Activated B cell treated with CpG ODN at 0.5 μM for 24 hours (primary cell): ENCODE measurements at regions of chr20 and their contacts with region 1.

Region 1: DNA sequence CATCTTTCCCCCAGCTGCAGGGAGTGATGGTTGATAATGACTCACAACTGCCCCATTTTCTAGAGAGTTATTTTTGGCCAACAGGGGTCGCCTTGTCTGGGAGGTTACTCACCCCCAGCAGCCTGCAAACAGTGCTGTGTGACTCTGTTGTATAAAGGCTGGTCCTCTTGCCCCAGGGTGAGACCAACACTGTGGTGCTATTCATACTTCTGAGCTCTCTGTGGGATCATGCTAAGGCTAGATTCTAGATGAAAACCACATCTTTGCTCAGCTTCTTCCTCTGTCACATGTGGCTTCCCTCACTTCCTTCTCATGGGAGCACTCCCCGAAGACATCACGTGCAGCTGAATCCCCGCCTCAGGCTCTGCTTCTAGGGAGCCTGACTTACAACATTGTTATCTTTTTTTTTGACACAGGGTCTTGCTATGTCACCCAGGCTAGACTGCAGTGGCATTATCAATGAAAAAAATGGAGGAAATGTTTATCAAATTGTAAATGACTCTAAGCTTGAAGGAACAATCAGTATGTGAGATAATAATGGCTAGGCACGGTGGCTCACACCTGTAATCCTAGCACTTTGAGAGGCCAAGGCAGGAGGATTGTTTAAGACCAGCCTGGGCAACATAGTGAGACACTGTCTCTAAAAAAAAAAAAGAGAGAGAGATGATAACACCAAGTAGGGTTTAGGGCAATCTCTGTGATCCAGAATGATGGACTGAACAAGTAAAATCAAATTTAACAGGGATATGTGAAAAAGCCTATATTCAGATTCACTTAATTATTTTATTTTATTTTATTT is 55.7 kb upstream of the SLC23A2 start:
- DNase-seq: peak; percentile 20
- ATAC-seq: peak; percentile 92
- H3K4me3 Mint-ChIP-seq: no peak overlapping the region
- H3K27ac Mint-ChIP-seq: peak overlapping the region; percentile 73
- H3K4me1 Mint-ChIP-seq: peaks cover 16% of the 10 kb centered on the region
- H3K27me3 Mint-ChIP-seq: no peaks in the 10 kb centered on the region
- CTCF ChIP-seq: no peak

Region 2: GRCh38 chr20:5041433-5041832 is 15.6 kb before region 1 on chr20:
- CTCF ChIA-PET with region 1: interaction called, 3 read pairs
- POLR2A ChIA-PET with region 1: interaction called, 4 read pairs
- intact Hi-C with region 1: loop called (anchors 1 kb)
- DNase-seq: no peak
- ATAC-seq: peak; percentile 34
- H3K4me3 Mint-ChIP-seq: no peak overlapping the region
- H3K27ac Mint-ChIP-seq: no peak overlapping the region
- H3K4me1 Mint-ChIP-seq: peaks cover 26% of the 10 kb centered on the region
- H3K27me3 Mint-ChIP-seq: no peaks in the 10 kb centered on the region
- CTCF ChIP-seq: no peak

Region 3: GRCh38 chr20:5046656-5047339 is 10.2 kb before region 1 on chr20:
- CTCF ChIA-PET with region 1: interaction called, 10 read pairs
- POLR2A ChIA-PET with region 1: interaction called, 4 read pairs
- intact Hi-C with region 1: no loop called
- DNase-seq: no peak
- ATAC-seq: peak; percentile 95
- H3K4me3 Mint-ChIP-seq: peak overlapping the region; percentile 3
- H3K27ac Mint-ChIP-seq: peak overlapping the region; percentile 53
- H3K4me1 Mint-ChIP-seq: peaks cover 30% of the 10 kb centered on the region
- H3K27me3 Mint-ChIP-seq: no peaks in the 10 kb centered on the region
- CTCF ChIP-seq: no peak